Transverse colon (tissue), 4 donors: ENCODE measurements at regions of chr20 and their contacts with region 1.

Region 1: DNA sequence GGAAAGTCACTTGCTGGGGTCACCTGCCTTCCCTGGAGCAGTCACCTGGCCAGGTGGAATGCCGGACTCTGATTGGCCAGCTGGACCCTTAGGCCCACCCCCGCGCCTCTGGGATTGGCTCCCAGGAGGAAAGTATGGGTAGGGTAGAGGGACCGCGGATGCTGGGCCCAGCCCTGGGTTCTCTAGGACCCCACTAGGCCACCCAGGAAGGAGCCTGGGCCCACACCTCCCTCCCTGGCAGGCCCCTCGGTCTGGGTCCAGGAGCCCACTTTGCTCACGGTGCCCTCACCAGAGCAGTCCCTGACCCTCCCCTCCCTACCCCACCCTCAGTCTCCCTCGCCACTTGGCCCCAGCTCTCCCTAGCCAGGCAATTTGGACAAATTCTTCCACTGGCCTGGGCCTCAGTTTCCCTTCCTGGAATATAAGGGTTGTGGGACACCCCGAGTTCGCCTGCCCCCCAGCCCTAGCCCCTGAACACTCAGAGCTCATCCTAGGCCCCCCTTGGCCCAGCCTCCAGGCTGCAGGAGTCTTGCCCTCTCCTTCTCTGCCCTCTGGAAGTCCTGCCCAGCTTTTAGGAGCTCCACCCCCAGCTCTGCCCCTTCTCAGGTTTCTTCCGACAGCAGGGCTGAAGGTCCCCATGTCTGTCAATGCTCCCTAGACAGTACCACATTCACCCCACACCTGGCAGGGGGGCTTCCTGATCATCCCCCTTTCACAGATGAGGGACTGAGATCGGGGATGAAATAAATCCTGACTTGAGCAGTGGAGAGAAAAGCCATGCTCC is 299.6 kb downstream of the TAF4 start:
- DNase-seq: no peak
- H3K4me3 ChIP-seq: no peak overlapping the region
- H3K27ac ChIP-seq: no peak overlapping the region
- H3K4me1 ChIP-seq: no peaks in the 10 kb centered on the region
- H3K27me3 ChIP-seq: no peaks in the 10 kb centered on the region
- CTCF ChIP-seq: no peak
- EP300 ChIP-seq: no peak
- POLR2A ChIP-seq: no peak

Region 2: GRCh38 chr20:62080249-62081025 is 314.4 kb after region 1 on chr20:
- in situ Hi-C with region 1: no loop called
- intact Hi-C with region 1: no loop called
- DNase-seq: no peak
- H3K4me3 ChIP-seq: no peak overlapping the region
- H3K27ac ChIP-seq: no peak overlapping the region
- H3K4me1 ChIP-seq: no peaks in the 10 kb centered on the region
- H3K27me3 ChIP-seq: no peaks in the 10 kb centered on the region
- CTCF ChIP-seq: no peak
- EP300 ChIP-seq: no peak
- POLR2A ChIP-seq: no peak

Region 3: DNA sequence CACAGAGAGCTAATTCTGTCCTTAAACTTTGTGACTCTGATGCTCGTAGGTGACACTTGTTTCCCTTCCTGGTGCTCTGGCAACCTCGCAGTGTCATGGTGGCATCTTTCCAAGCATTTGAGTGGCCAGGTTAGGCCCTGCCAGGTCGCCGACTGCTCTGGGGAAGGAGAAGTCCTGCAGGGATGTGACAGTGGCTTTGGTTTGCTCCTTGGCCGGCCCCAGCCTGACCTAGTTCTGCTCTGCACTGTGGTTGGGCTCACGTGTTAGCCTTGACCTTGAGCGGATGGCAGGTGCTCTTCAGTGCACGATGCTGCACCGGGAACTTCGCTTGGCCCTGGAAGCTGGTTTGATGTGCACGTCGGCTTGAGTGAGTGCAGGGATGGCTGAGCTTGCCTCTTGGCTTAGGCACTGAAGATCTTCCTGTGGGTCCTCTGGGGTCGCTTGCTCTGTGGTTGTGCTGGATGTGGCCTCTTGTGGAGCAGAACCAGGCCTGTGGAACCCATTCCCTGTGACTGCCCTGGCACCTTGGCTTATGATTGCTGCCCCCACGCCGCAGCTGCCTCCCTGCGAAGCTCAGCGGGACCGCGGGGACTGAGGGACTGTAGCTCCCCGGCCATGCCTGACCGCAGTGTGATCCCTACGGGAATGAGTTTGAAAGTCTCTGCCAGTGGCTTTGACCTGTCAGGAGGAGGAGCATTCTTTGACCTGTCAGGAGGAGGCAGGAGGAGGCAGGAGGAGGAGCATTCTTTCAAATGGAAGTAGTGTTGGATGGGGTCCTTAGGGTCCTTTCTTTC is 481.0 kb after region 1 on chr20:
- in situ Hi-C with region 1: no loop called
- intact Hi-C with region 1: loop called (anchors 10 kb)
- DNase-seq: no peak
- H3K4me3 ChIP-seq: no peak overlapping the region
- H3K27ac ChIP-seq: no peak overlapping the region
- H3K4me1 ChIP-seq: peaks cover 0 to 34% (median 3%) of the 10 kb centered on the region in 4 donors
- H3K27me3 ChIP-seq: no peaks in the 10 kb centered on the region
- CTCF ChIP-seq: no peak
- EP300 ChIP-seq: no peak
- POLR2A ChIP-seq: no peak